ENCODE measurements at regions of chr9 and their contacts with region 1.

Region 1: GRCh38 chr9:101311758-101312420 is 72.9 kb downstream of the BAAT start:
- DNase-seq: no peak
- ATAC-seq: peak; percentile 34 to 74 (median 55)
- H3K4me3 ChIP-seq: no peak overlapping the region
- H3K27ac ChIP-seq: no peak overlapping the region
- H3K4me1 ChIP-seq: no peaks in the 10 kb centered on the region
- H3K27me3 ChIP-seq: no peaks in the 10 kb centered on the region
- CTCF ChIP-seq: peak; percentile 73

Region 2: GRCh38 chr9:100700689-100701318 is 611.1 kb before region 1 on chr9:
- intact Hi-C with region 1: loop called (anchors 5 kb)
- DNase-seq: no peak
- ATAC-seq: peak in 1 of 4 donors; percentile 42
- H3K4me3 ChIP-seq: no peak overlapping the region
- H3K27ac ChIP-seq: no peak overlapping the region
- H3K4me1 ChIP-seq: no peaks in the 10 kb centered on the region
- H3K27me3 ChIP-seq: no peaks in the 10 kb centered on the region
- CTCF ChIP-seq: peak; percentile 39

Region 3: DNA sequence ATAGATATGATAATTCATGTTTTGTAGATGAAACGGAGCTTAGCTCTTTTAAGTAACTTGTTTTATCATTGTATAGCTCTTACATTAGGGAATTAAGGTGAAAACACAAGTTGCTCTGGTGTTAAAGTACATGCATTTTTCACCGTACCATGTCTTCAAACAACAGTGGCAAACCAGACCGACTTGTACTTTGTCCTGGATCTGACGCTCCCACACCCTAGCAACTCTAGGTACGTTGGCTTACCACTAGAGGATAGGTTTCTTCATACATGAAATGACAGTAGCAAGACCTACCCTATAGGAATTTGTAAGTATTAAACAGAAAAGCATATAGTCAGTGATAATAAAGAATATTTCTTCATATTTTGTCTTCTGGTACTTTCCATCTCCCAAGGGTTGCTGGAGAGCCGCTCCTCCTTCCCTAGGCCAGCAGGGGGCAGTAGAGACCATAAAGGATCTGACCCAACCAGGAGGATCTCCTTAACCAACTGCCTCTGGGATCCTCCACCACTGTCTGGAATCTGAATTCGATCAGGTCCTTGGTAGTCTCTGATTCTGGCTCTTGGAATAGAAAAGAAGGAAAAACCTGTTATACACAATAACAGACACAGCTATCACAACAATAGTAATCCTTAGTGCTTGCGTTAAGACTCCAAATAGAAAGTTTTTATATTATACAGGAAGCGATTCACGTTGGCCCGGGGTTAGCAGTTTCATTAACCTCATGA is 597.4 kb before region 1 on chr9:
- intact Hi-C with region 1: loop called in 1 of 2 experiments (anchors 5 kb)
- DNase-seq: peak in 1 of 2 donors; percentile 53
- ATAC-seq: peak in 1 of 4 donors; percentile 64
- H3K4me3 ChIP-seq: no peak overlapping the region
- H3K27ac ChIP-seq: no peak overlapping the region
- H3K4me1 ChIP-seq: no peaks in the 10 kb centered on the region
- H3K27me3 ChIP-seq: peaks cover 0 to 2% (median 0%) of the 10 kb centered on the region in 3 donors
- CTCF ChIP-seq: peak; percentile 61

Region 4: GRCh38 chr9:101119206-101119819 is 192.6 kb before region 1 on chr9:
- intact Hi-C with region 1: loop called in 1 of 2 experiments (anchors 10 kb)
- DNase-seq: peak; percentile 21 to 30
- ATAC-seq: peak in 3 of 4 donors; percentile 57 to 62 (median 58)
- H3K4me3 ChIP-seq: no peak overlapping the region
- H3K27ac ChIP-seq: no peak overlapping the region
- H3K4me1 ChIP-seq: no peaks in the 10 kb centered on the region
- H3K27me3 ChIP-seq: no peaks in the 10 kb centered on the region
- CTCF ChIP-seq: peak; percentile 45

Measured in psoas muscle (tissue), 8 donors.